ENCODE measurements at regions of chr7 and their contacts with region 1.

Region 1: DNA sequence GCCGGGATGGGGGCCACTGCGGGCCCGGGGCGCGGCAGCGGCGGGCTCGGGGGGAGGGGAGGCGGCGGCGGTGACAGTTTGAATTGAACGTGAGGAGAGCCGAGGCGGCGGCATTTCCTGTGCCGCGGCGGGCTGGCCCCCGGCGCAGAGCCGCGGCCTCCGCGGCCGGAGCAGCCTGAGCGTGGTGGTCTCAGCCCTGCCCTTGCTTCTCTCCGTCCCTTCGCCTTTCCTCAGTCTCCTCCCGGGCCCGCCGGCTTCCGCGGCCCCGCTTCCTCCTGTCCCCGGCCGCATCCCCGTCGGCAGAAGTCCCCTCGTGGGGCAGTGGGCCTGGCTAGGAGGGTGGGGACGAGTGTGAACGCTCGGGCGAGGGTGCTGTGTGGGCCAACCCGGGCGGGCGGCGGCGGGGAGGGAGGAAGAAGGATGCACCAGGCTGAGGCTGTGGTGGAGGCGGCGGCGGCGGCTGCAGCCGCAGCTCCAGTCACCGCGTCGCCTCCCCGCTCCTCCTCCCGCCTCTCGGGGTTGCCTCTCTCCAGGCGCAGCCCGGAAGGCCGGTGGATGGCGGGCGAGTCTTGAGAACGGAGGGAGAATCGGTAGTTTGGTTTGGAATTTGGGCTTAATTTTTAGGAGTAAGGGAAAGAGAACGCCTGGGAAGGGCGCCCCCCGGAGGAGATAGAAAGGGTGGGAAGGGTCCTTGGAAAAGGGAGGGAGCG is 690 bp downstream of the SEPTIN7 start:
- DNase-seq: peak; percentile 86
- H3K4me3 ChIP-seq: peak overlapping the region; percentile 83 to 93 (median 86)
- H3K27ac ChIP-seq: peak overlapping the region; percentile 94 to 98 (median 96)
- H3K4me1 ChIP-seq: peaks cover 0 to 55% (median 45%) of the 10 kb centered on the region in 4 donors
- H3K27me3 ChIP-seq: no peaks in the 10 kb centered on the region
- CTCF ChIP-seq: peak; percentile 25 to 57 (median 40)
- EP300 ChIP-seq: no peak
- POLR2A ChIP-seq: no peak

Region 2: DNA sequence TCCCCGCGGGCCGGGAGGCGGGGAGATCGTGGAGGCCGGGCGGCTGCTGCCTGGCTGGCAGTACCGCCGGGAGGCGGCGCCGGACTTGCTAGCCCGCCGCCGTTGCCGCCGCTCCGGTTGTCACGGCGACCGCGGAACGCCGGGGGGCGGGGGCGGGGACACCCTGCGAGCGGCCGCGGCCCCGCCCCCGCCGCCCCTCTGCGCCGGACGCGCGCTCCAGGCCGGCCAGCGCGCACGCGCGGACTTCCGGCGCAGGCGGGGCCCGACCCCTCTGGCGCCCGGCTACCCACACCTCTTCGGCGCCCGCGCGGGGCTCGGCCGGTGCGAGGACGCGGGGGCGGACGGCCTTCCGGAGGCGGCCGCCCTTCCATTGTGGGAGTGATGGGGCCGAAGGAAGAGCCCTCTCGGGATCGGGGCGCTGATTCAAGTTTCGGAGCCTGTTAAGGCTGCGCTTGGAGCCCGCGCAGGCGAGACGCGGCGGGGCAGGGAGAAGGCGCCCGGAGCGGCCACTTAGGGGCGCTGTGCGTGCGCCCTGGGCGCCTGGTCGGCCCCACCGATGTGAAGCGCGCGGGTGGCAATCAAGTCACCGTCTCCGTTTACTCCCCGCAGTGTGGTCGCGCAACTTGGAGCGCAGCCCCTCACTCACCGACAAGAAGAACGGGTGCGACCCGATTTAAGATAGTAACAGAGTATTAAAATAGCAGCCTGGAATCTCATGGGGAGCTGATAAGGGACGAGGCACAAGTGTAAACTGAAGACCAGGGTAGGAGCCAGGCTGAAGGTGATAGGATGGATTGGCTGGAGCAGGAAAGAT is 763.8 kb before region 1 on chr7:
- intact Hi-C with region 1: loop called (anchors 5 kb)
- DNase-seq: peak; percentile 96
- H3K4me3 ChIP-seq: peak overlapping the region; percentile 57 to 71 (median 68)
- H3K27ac ChIP-seq: peak overlapping the region; percentile 88 to 94 (median 90)
- H3K4me1 ChIP-seq: peaks cover 0 to 24% (median 19%) of the 10 kb centered on the region in 4 donors
- H3K27me3 ChIP-seq: no peaks in the 10 kb centered on the region
- CTCF ChIP-seq: peak; percentile 70 to 81 (median 74)
- EP300 ChIP-seq: no peak
- POLR2A ChIP-seq: no peak

Region 3: GRCh38 chr7:35544028-35544742 is 257.4 kb before region 1 on chr7:
- intact Hi-C with region 1: no loop called
- DNase-seq: no peak
- H3K4me3 ChIP-seq: no peak overlapping the region
- H3K27ac ChIP-seq: no peak overlapping the region
- H3K4me1 ChIP-seq: no peaks in the 10 kb centered on the region
- H3K27me3 ChIP-seq: no peaks in the 10 kb centered on the region
- CTCF ChIP-seq: no peak
- EP300 ChIP-seq: no peak
- POLR2A ChIP-seq: no peak

Region 4: GRCh38 chr7:35694781-35695472 is 106.6 kb before region 1 on chr7 and contains the start of gene HERPUD2:
- intact Hi-C with region 1: loop called (anchors 5 kb)
- DNase-seq: peak; percentile 97
- H3K4me3 ChIP-seq: peak within 1 kb of the TSS; percentile 73 to 89 (median 86)
- H3K27ac ChIP-seq: peak within 1 kb of the TSS; percentile 88 to 96 (median 92)
- H3K4me1 ChIP-seq: peaks cover 0 to 54% (median 43%) of the 10 kb centered on the region in 4 donors
- H3K27me3 ChIP-seq: no peaks in the 10 kb centered on the region
- CTCF ChIP-seq: no peak
- EP300 ChIP-seq: no peak
- POLR2A ChIP-seq: peak; percentile 74 to 76
- total RNA-seq, gene HERPUD2: 21.7 to 40.7 (median 31.4) TPM

Region 5: DNA sequence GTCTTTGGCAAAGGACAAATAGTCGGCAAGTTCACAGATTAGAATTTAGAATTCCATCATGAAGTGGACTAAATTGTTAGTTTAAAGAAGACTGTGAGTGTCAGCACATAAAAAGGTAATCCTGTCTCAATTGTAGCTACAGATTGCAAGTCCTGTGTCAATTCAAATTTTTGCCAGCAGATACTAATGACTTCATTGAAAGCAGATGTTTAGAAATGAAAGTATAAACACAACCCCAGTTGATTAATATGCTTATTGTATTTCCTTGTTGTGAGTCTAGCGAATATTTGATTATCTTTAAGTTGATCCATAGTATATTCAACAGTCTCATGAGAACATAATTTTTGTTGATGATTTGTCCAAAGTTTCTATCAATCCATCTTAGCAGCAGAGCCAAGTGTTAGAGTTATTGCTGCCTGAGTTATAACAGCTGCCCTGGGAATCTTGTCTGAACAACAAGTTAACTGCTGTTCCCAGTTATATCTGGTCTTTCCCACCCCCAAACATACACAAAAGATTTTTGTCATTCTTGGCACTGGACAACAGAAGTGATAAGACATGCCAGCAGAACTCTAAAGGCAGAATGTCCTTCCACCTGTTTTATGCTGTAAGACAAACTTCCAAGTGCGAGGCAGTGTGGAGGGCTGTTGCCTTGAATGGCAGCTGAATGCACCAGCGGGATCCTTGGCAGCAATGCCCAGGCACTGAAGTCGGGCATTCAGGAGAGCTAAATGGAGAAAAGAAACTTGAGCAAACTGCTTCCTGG is 85.3 kb before region 1 on chr7:
- intact Hi-C with region 1: loop called (anchors 2 kb)
- DNase-seq: no peak
- H3K4me3 ChIP-seq: peak overlapping the region in 3 of 4 donors; percentile 7 to 39 (median 12)
- H3K27ac ChIP-seq: peak overlapping the region; percentile 48 to 78 (median 62)
- H3K4me1 ChIP-seq: peaks cover 0 to 44% (median 23%) of the 10 kb centered on the region in 4 donors
- H3K27me3 ChIP-seq: no peaks in the 10 kb centered on the region
- CTCF ChIP-seq: no peak
- EP300 ChIP-seq: no peak
- POLR2A ChIP-seq: no peak

Region 6: DNA sequence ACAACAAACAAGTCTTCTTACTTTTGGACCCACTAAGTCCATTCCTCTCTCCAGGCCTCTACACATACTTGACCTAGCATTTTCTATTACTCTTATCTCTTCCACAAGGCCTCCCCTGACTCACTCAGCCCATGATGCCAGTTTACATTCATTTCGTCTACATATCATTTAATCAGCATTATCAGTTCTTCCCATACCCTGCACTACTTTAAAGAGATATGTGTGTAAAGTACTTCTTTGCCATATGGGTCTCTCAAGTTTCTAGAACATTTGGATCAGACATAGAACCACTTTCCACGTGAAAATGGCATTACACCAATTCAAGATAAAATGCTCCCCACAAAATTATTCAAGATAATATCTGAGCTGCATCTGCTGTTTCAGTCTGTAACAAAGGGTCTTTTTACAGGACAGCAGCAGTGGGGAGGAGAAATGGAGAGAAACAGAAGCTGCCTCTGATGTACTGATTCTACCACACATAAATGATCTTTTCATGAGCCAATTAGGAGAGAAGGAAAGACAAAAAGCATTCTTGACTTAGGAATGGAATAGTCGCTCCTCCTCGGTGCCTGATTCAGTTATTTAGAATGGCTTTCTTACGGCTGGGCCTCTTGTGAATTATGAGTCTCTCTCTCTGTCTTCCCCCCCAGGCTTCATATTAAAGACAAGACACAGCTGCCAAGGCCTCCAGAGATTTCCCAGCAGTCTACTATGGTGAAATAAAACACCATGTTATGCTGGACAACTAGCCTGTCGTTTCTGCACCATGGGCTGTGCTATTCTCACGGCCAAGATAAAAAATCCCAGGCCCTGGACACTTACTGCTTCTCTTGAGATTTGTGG is 47.6 kb before region 1 on chr7:
- intact Hi-C with region 1: loop called (anchors 2 kb)
- DNase-seq: peak; percentile 92
- H3K4me3 ChIP-seq: no peak overlapping the region
- H3K27ac ChIP-seq: peak overlapping the region; percentile 55 to 79 (median 72)
- H3K4me1 ChIP-seq: peaks cover 0 to 41% (median 27%) of the 10 kb centered on the region in 4 donors
- H3K27me3 ChIP-seq: no peaks in the 10 kb centered on the region
- CTCF ChIP-seq: no peak
- EP300 ChIP-seq: peak; percentile 10 to 56 (median 38)
- POLR2A ChIP-seq: no peak

Region 7: DNA sequence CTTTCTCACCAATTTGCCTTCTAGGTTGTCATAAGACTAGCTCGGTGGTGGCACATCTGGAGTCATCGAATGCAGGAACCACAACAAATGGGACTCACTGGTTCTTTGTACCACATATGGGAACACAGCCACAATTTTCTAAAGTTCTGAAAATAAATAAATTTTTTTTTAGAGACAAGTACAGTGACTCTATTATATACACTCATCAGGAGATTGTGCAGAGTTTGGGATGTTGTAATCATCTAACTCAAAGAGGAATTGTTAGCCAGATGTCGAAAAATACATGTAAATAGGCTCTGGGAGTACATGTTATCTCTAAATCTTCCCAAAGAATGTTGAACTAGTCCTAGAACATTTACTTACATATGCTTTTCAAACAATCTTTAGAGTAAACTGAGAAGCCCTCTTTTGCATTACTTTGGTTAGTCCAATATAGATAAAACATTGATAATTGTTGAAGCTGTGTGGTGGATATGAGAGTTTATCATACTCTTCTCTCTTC is 20.3 kb before region 1 on chr7:
- intact Hi-C with region 1: no loop called
- DNase-seq: no peak
- H3K4me3 ChIP-seq: no peak overlapping the region
- H3K27ac ChIP-seq: no peak overlapping the region
- H3K4me1 ChIP-seq: no peaks in the 10 kb centered on the region
- H3K27me3 ChIP-seq: no peaks in the 10 kb centered on the region
- CTCF ChIP-seq: no peak
- EP300 ChIP-seq: no peak
- POLR2A ChIP-seq: no peak

Region 8: GRCh38 chr7:35849158-35849831 is 47.7 kb after region 1 on chr7:
- intact Hi-C with region 1: loop called (anchors 5 kb)
- DNase-seq: no peak
- H3K4me3 ChIP-seq: no peak overlapping the region
- H3K27ac ChIP-seq: peak overlapping the region in 2 of 4 donors; percentile 1 to 9
- H3K4me1 ChIP-seq: peaks cover 0 to 48% (median 31%) of the 10 kb centered on the region in 4 donors
- H3K27me3 ChIP-seq: no peaks in the 10 kb centered on the region
- CTCF ChIP-seq: no peak
- EP300 ChIP-seq: no peak
- POLR2A ChIP-seq: no peak

Region 9: DNA sequence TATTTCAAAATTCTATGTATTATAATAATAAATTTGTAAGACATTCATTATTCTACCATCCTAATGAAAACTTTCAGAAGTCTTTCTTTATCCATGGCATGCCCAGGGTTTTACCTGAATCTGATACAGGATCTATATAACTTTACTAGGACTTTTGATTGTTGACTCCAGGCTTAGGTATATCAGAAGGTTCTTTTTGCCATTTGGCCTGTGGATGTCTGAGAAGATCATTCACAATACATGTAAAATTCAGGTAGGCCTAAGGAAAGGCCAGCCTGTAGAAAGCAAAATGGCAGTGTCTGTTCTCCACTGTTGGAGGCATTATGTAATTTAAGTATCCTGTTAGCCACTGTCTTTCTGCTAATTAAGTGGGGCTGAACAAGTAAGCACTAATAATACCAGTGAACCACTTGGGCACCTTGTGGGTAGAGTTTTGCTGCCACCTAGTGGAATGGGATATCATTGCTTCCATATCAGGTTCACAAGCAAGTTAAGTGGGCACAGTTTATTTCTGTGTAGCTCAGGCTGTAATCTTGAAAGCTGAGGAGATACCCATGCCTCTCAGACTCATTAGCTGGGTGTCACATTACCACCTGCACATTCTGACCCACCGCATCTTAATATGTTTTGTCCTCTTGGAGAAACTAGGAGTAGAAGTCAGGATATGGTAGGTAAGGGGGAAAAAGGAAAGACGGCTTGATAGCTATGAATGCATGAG is 104.8 kb after region 1 on chr7:
- intact Hi-C with region 1: loop called (anchors 2 kb)
- DNase-seq: peak; percentile 73
- H3K4me3 ChIP-seq: no peak overlapping the region
- H3K27ac ChIP-seq: peak overlapping the region in 2 of 4 donors; percentile 25 to 38
- H3K4me1 ChIP-seq: peaks cover 0 to 15% (median 10%) of the 10 kb centered on the region in 4 donors
- H3K27me3 ChIP-seq: no peaks in the 10 kb centered on the region
- CTCF ChIP-seq: peak; percentile 81 to 95 (median 88)
- EP300 ChIP-seq: no peak
- POLR2A ChIP-seq: no peak

Region 10: DNA sequence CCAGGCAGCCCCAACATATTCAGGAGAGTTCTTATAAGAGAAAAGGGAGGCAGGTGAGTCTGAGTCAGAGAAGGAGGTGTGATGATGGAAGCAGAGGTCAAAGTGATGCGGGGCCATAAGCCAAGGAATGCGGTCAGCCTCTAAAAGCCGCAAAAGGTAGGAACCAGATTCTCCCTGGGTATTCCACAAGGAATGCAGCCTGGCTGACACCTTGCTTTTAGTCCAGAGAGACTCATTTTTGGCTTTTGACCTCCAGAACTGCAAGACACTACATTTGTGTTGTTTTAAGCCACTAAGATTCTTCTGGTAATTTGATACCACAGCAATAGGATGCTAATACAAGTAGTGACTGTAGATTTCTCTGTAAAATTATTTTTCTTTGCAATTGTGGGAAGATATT is 200.0 kb after region 1 on chr7:
- intact Hi-C with region 1: no loop called
- DNase-seq: no peak
- H3K4me3 ChIP-seq: no peak overlapping the region
- H3K27ac ChIP-seq: no peak overlapping the region
- H3K4me1 ChIP-seq: no peaks in the 10 kb centered on the region
- H3K27me3 ChIP-seq: no peaks in the 10 kb centered on the region
- CTCF ChIP-seq: no peak
- EP300 ChIP-seq: no peak
- POLR2A ChIP-seq: no peak

Measured in sigmoid colon (tissue), 7 donors.